Ovary (tissue), 10 donors: ENCODE measurements at regions of chr7 and their contacts with region 1.

Region 1: DNA sequence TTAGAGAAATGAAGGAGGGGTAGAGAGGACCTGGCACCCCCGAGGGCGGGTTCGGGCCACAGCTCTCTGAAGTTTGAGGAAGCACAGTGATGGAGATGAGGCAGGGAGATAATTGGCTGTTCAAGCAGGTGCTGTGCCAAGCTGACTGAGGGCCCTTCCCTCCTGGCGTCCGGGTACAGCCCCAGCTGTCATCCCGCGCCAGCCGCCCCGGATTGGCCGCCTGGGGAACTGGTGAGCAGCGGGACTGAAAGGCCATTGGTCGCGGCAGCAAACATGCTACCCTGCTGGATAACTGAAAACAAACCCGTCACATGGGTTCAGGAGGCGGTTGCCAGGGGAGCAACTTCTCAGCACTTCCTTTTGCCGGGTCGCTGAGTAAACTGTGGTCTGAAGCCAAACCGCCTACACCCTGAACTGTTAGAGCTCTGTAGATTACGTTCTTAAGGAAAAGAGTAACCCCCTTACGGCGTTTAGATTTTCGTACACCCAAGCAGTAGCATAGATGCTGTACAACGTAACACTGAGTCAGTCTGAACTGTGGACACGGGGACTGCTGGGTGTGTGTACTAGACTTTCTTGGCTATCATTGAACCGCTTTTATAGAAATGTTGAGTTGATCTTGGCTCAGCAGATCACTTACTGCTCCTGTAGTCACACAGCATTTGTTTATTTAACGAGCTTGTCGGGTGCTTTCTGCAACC is 1.3 kb downstream of the INSIG1 start:
- DNase-seq: peak; percentile 84 to 89 (median 88)
- H3K4me3 ChIP-seq: peak overlapping the region; percentile 55
- H3K27ac ChIP-seq: peak overlapping the region; percentile 96 to 97
- H3K4me1 ChIP-seq: peaks cover 5% of the 10 kb centered on the region
- H3K27me3 ChIP-seq: no peaks in the 10 kb centered on the region
- CTCF ChIP-seq: no peak
- EP300 ChIP-seq: no peak
- POLR2A ChIP-seq: peak; percentile 34

Region 2: GRCh38 chr7:155003376-155004214 is 295.4 kb before region 1 on chr7:
- intact Hi-C with region 1: loop called in 1 of 4 experiments (anchors 10 kb)
- DNase-seq: peak in 4 of 5 donors; percentile 76 to 91 (median 84)
- H3K4me3 ChIP-seq: peak overlapping the region; percentile 56
- H3K27ac ChIP-seq: peak overlapping the region; percentile 90 to 95
- H3K4me1 ChIP-seq: peaks cover 10% of the 10 kb centered on the region
- H3K27me3 ChIP-seq: no peaks in the 10 kb centered on the region
- CTCF ChIP-seq: no peak
- EP300 ChIP-seq: no peak
- POLR2A ChIP-seq: peak; percentile 65

Region 3: GRCh38 chr7:155257482-155258225 is 41.3 kb before region 1 on chr7:
- intact Hi-C with region 1: loop called in 1 of 4 experiments (anchors 5 kb)
- DNase-seq: peak in 2 of 5 donors; percentile 39 to 47
- H3K4me3 ChIP-seq: no peak overlapping the region
- H3K27ac ChIP-seq: peak overlapping the region in 1 of 2 donors; percentile 45
- H3K4me1 ChIP-seq: no peaks in the 10 kb centered on the region
- H3K27me3 ChIP-seq: no peaks in the 10 kb centered on the region
- CTCF ChIP-seq: no peak
- EP300 ChIP-seq: no peak
- POLR2A ChIP-seq: no peak

Region 4: GRCh38 chr7:155456738-155457564 is 158.0 kb after region 1 on chr7:
- intact Hi-C with region 1: loop called in 1 of 4 experiments (anchors 10 kb)
- DNase-seq: peak; percentile 77 to 86 (median 85)
- H3K4me3 ChIP-seq: peak overlapping the region; percentile 47
- H3K27ac ChIP-seq: no peak overlapping the region
- H3K4me1 ChIP-seq: peaks cover 4% of the 10 kb centered on the region
- H3K27me3 ChIP-seq: peaks cover 2% of the 10 kb centered on the region
- CTCF ChIP-seq: no peak
- EP300 ChIP-seq: no peak
- POLR2A ChIP-seq: no peak

Region 5: GRCh38 chr7:156178214-156178613 is 879.2 kb after region 1 on chr7:
- intact Hi-C with region 1: no loop called
- DNase-seq: no peak
- H3K4me3 ChIP-seq: no peak overlapping the region
- H3K27ac ChIP-seq: no peak overlapping the region
- H3K4me1 ChIP-seq: no peaks in the 10 kb centered on the region
- H3K27me3 ChIP-seq: no peaks in the 10 kb centered on the region
- CTCF ChIP-seq: no peak
- EP300 ChIP-seq: no peak
- POLR2A ChIP-seq: no peak